ENCODE measurements at regions of chr3 and their contacts with region 1.

Region 1: DNA sequence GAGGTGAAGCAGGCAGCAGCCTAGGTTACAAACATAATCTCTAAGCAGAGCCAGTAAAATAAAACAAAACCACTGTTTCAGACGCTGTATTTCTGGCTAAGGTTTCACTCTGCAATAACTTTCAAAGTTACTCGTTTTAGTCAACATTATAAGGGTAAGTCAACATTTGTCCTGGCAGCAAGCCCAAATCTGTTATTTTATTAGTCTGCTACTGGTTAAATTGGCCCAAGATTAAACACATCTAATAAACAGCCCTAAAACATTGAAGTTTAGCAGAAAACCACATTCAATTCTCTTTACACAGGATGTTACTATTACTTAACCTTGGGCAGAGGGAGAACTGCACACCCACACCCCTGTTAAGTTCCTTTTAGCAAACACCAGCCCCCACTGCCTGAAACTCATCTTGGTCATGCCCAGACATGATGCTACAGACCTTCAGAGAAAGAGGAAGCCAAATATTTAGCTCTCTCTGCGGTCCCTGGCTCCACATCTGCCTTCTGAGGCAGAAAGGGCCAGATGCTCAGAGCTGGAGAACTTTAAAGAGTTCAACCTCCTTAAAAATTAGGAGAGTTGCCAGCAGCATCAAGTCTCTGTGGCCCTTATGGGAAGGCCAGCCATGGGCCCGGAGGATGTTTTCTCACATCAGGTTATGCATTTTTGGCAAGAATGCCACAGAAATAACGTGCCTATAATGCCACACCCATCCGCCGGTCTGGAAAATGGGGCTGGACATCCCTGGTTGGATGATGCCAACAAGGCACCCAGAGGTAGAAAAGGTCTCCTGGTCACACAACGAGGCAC is 17.9 kb downstream of the ARHGEF3 start:
- DNase-seq: peak; percentile 62 to 85
- ATAC-seq: peak; percentile 84 to 95 (median 94)
- H3K4me3 ChIP-seq: peak overlapping the region; percentile 2
- H3K4me3 Mint-ChIP-seq: peak overlapping the region; percentile 86
- H3K27ac ChIP-seq: peak overlapping the region; percentile 86
- H3K27ac Mint-ChIP-seq: peak overlapping the region; percentile 85 to 92
- H3K4me1 ChIP-seq: peaks cover 87% of the 10 kb centered on the region
- H3K4me1 Mint-ChIP-seq: peaks cover 95 to 97% of the 10 kb centered on the region in 2 donors
- H3K27me3 ChIP-seq: no peaks in the 10 kb centered on the region
- H3K27me3 Mint-ChIP-seq: no peaks in the 10 kb centered on the region
- CTCF ChIP-seq: no peak

Region 2: DNA sequence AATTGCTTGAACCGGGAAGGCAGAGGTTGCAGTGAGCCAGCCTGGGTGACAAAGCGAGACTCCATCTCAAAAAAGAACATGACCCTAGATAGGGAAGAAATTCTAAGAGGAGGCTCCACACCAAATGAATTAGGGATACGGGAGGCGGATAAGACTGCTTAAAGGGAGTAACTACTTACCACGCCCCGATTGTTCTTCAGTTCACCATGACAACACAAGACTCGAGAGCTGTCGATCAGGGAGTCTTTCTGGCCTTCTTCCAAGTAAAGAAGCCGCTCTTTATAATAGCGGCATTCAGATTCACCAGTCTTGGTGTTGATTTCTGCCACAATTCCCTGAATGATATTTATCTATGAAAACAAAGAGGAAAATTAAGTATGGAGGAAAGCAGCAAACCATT is 46.8 kb before region 1 on chr3:
- intact Hi-C with region 1: loop called (anchors 5 kb)
- DNase-seq: no peak
- ATAC-seq: no peak
- H3K4me3 ChIP-seq: no peak overlapping the region
- H3K4me3 Mint-ChIP-seq: no peak overlapping the region
- H3K27ac ChIP-seq: no peak overlapping the region
- H3K27ac Mint-ChIP-seq: peak overlapping the region; percentile 89 to 94
- H3K4me1 ChIP-seq: peaks cover 24% of the 10 kb centered on the region
- H3K4me1 Mint-ChIP-seq: peaks cover 36 to 46% of the 10 kb centered on the region in 2 donors
- H3K27me3 ChIP-seq: no peaks in the 10 kb centered on the region
- H3K27me3 Mint-ChIP-seq: no peaks in the 10 kb centered on the region
- CTCF ChIP-seq: no peak

Region 3: GRCh38 chr3:56894881-56895431 is 111.1 kb after region 1 on chr3:
- intact Hi-C with region 1: no loop called
- DNase-seq: peak in 1 of 2 donors; percentile 40
- ATAC-seq: no peak
- H3K4me3 ChIP-seq: no peak overlapping the region
- H3K4me3 Mint-ChIP-seq: no peak overlapping the region
- H3K27ac ChIP-seq: no peak overlapping the region
- H3K27ac Mint-ChIP-seq: no peak overlapping the region
- H3K4me1 ChIP-seq: peaks cover 5% of the 10 kb centered on the region
- H3K4me1 Mint-ChIP-seq: peaks cover 8 to 17% of the 10 kb centered on the region in 2 donors
- H3K27me3 ChIP-seq: no peaks in the 10 kb centered on the region
- H3K27me3 Mint-ChIP-seq: no peaks in the 10 kb centered on the region
- CTCF ChIP-seq: no peak

Region 4: GRCh38 chr3:56939834-56940233 is 156.0 kb after region 1 on chr3:
- intact Hi-C with region 1: no loop called
- DNase-seq: no peak
- ATAC-seq: peak in 1 of 3 donors; percentile 30
- H3K4me3 ChIP-seq: no peak overlapping the region
- H3K4me3 Mint-ChIP-seq: no peak overlapping the region
- H3K27ac ChIP-seq: no peak overlapping the region
- H3K27ac Mint-ChIP-seq: no peak overlapping the region
- H3K4me1 ChIP-seq: no peaks in the 10 kb centered on the region
- H3K4me1 Mint-ChIP-seq: no peaks in the 10 kb centered on the region
- H3K27me3 ChIP-seq: no peaks in the 10 kb centered on the region
- H3K27me3 Mint-ChIP-seq: peaks cover 9 to 11% of the 10 kb centered on the region in 2 donors
- CTCF ChIP-seq: no peak